ENCODE measurements at regions of chr21 and their contacts with region 1.

Region 1: DNA sequence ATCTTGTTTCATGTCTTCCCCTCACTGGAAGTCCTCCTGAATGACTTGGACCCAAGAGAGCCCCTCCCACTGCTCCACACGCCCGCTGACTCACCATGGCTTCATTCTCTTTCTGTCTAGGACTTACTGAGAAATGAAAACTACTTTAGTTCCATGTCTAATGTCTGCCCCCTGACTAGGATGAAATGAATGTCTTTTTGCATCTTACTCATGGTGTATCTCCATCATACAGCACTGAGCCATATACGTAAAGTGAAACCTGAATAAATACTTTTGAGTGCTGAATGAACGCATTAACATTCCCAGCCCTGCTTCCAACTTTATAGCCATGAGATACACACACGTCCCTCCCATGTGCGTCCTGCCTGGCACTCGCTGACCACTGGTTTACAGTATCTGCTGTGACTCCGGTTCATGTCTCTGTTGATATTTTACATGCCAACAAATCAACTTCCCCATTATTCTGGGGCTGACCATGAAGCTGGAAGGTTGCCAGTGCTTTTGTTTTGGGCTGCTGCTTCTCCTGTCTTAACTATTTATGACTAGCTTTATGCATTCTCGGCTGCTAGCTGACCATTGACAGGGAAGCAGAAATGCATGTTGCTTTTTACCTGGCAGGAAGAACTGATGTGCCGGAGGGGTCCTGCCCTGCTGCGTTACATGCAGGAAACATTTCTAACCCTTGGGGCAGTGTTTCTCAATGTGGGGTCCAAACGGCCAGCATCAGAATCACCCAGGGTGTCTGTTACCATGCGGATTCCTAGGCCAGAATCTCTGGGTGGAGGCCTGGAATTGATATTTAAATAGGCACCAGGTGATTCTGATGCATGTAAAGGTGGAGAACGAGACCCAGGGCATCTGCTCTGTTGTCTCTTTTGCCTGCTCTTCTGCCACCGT is 182.4 kb downstream of the PCP4 start:
- DNase-seq: peak; percentile 83
- H3K4me3 ChIP-seq: no peak overlapping the region
- H3K27ac ChIP-seq: peak overlapping the region; percentile 84 to 88 (median 85)
- H3K4me1 ChIP-seq: peaks cover 0 to 80% (median 66%) of the 10 kb centered on the region in 4 donors
- H3K27me3 ChIP-seq: no peaks in the 10 kb centered on the region
- CTCF ChIP-seq: peak in 1 of 4 experiments; percentile 22
- EP300 ChIP-seq: peak in 1 of 4 donors; percentile 26
- POLR2A ChIP-seq: no peak

Region 2: DNA sequence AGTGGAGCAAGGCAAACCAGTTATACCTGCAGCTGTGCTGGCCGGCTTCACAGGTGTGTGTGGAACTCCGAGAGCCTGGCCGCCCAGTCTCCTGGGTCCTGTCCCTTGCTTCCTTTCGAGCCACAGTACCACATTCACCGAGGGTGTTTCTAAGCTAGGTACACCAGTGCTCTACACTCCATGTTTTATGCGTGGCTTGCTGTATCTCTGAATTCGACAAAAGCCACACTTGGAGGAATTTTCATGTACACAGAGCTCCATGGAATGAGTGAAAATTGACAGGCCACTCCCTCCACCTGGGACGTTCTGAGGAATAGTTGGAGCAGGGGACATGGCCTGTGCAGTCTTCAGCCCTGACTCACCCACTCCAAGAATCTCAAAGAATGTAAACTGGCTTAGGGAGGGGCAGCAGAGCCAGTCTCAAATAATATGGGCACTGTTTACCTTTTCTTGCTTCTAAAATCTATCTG is 1229.9 kb before region 1 on chr21:
- intact Hi-C with region 1: loop called (anchors 5 kb)
- DNase-seq: no peak
- H3K4me3 ChIP-seq: no peak overlapping the region
- H3K27ac ChIP-seq: peak overlapping the region; percentile 14 to 83 (median 78)
- H3K4me1 ChIP-seq: peaks cover 0 to 79% (median 52%) of the 10 kb centered on the region in 4 donors
- H3K27me3 ChIP-seq: no peaks in the 10 kb centered on the region
- CTCF ChIP-seq: no peak
- EP300 ChIP-seq: no peak
- POLR2A ChIP-seq: no peak

Region 3: GRCh38 chr21:38913120-38913892 is 1136.3 kb before region 1 on chr21:
- intact Hi-C with region 1: loop called (anchors 5 kb)
- DNase-seq: peak; percentile 91
- H3K4me3 ChIP-seq: peak overlapping the region in 3 of 4 donors; percentile 11 to 17 (median 16)
- H3K27ac ChIP-seq: peak overlapping the region; percentile 54 to 82 (median 79)
- H3K4me1 ChIP-seq: peaks cover 0 to 33% (median 23%) of the 10 kb centered on the region in 4 donors
- H3K27me3 ChIP-seq: no peaks in the 10 kb centered on the region
- CTCF ChIP-seq: no peak
- EP300 ChIP-seq: no peak
- POLR2A ChIP-seq: peak in 1 of 2 donors; percentile 49

Region 4: GRCh38 chr21:39675993-39676661 is 373.5 kb before region 1 on chr21:
- intact Hi-C with region 1: loop called (anchors 5 kb)
- DNase-seq: peak; percentile 91
- H3K4me3 ChIP-seq: peak overlapping the region in 3 of 4 donors; percentile 21 to 38 (median 30)
- H3K27ac ChIP-seq: peak overlapping the region; percentile 71 to 89 (median 81)
- H3K4me1 ChIP-seq: peaks cover 0 to 44% (median 32%) of the 10 kb centered on the region in 4 donors
- H3K27me3 ChIP-seq: no peaks in the 10 kb centered on the region
- CTCF ChIP-seq: no peak
- EP300 ChIP-seq: peak in 3 of 4 donors; percentile 76 to 89 (median 86)
- POLR2A ChIP-seq: no peak

Region 5: DNA sequence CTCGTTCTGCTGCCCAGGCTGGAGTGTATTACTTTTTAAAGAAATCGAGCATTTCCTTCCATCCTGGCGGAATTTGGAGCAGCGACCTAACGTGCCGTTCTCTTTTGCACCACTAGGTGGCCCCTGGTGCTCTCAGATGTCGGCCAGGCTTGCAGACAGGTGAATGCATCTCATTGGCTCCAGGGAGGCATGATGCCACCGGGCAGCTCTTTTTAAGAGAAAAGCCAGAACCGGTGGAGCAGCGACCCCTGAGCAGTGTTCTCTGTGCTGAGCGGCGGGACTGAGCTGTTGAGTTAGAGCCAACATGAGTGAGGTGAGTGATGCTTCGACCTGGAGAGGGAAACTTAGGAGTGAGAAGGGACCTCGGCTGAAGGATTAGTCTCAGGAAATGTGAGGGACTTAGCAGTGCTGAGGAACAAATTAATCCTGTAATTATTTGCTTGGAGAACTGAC is 182.4 kb before region 1 on chr21 and contains the start of gene PCP4:
- intact Hi-C with region 1: loop called (anchors 2 kb)
- DNase-seq: peak; percentile 83
- H3K4me3 ChIP-seq: peak within 1 kb of the TSS; percentile 27 to 42 (median 40)
- H3K27ac ChIP-seq: peak within 1 kb of the TSS; percentile 44 to 74 (median 69)
- H3K4me1 ChIP-seq: peaks cover 0 to 13% (median 0%) of the 10 kb centered on the region in 4 donors
- H3K27me3 ChIP-seq: no peaks in the 10 kb centered on the region
- CTCF ChIP-seq: peak; percentile 53 to 85 (median 80)
- EP300 ChIP-seq: no peak
- POLR2A ChIP-seq: no peak
- total RNA-seq, gene PCP4: 88.8 to 198 (median 172) TPM

Region 6: DNA sequence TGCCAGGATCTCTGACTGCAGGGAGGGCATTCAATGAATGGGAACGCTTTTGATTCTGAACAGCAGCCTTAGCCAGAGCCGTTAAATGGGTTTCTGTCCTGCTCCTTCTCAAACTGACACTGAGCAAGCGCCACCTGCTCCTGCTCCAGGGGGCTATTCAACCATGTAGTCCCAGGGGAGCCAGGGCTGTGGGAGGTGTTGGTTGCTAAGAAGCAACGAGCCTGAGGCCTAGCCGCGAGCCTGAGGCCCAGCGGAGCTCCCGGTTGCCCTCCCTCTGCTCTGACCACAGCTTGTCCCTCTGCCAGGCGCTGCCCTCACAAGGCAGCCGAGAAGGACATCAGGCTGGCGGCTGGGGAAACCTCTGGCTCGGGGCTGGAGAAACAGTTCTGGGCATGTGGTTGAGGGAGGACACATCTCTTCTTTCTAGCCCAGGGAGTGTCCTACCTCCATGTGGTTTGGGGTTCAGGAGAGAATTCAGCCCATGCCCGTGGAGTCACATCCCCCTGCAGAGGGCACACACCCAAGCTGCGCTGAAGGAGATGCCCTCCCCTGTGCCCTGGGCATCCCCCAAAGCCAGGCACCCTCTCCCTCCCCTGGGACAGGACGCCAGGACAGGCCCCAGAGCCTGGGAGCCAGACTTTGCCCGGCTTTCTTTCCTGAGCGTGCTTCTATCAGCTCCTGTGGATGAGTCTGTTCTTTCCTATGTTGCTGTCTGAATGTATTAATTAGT is 164.4 kb before region 1 on chr21:
- intact Hi-C with region 1: loop called (anchors 5 kb)
- DNase-seq: peak; percentile 91
- H3K4me3 ChIP-seq: no peak overlapping the region
- H3K27ac ChIP-seq: peak overlapping the region; percentile 76 to 92 (median 84)
- H3K4me1 ChIP-seq: peaks cover 0 to 32% (median 19%) of the 10 kb centered on the region in 4 donors
- H3K27me3 ChIP-seq: no peaks in the 10 kb centered on the region
- CTCF ChIP-seq: no peak
- EP300 ChIP-seq: peak in 1 of 4 donors; percentile 48
- POLR2A ChIP-seq: no peak

Region 7: GRCh38 chr21:39956586-39956985 is 93.1 kb before region 1 on chr21:
- intact Hi-C with region 1: loop called (anchors 5 kb)
- DNase-seq: no peak
- H3K4me3 ChIP-seq: no peak overlapping the region
- H3K27ac ChIP-seq: peak overlapping the region; percentile 7 to 74 (median 54)
- H3K4me1 ChIP-seq: peaks cover 0 to 52% (median 13%) of the 10 kb centered on the region in 4 donors
- H3K27me3 ChIP-seq: no peaks in the 10 kb centered on the region
- CTCF ChIP-seq: no peak
- EP300 ChIP-seq: no peak
- POLR2A ChIP-seq: no peak

Region 8: DNA sequence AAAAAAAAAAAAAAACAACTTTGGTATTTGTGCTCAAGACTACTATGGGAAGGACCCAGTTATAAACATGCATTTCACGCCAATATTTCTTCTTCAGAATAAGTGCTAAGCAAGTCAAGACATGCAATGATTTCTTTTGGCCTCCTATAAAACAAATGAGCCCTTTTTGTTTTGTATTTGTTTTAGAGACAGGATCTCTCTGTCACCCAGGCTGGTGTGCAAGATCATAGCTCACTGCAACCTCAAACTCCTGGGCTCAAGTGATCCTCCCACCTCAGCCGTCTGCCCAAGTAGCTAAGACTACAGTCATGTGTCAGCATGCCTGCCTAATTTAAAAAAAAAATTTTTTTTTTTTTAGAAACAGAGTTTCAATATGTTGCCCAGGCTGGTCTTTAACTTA is 166.3 kb after region 1 on chr21:
- intact Hi-C with region 1: no loop called
- DNase-seq: no peak
- H3K4me3 ChIP-seq: no peak overlapping the region
- H3K27ac ChIP-seq: no peak overlapping the region
- H3K4me1 ChIP-seq: no peaks in the 10 kb centered on the region
- H3K27me3 ChIP-seq: no peaks in the 10 kb centered on the region
- CTCF ChIP-seq: no peak
- EP300 ChIP-seq: no peak
- POLR2A ChIP-seq: no peak